Gastrocnemius medialis (tissue), 4 donors: ENCODE measurements at regions of chr7 and their contacts with region 1.

Region 1: GRCh38 chr7:131254211-131254610 is 73.5 kb upstream of the MKLN1 start:
- DNase-seq: no peak
- ATAC-seq: no peak
- H3K4me3 ChIP-seq: no peak overlapping the region
- H3K27ac ChIP-seq: peak overlapping the region in 1 of 4 donors; percentile 89
- H3K4me1 ChIP-seq: peaks cover 11 to 30% of the 10 kb centered on the region in 2 donors
- H3K27me3 ChIP-seq: no peaks in the 10 kb centered on the region
- CTCF ChIP-seq: no peak
- POLR2A ChIP-seq: no peak

Region 2: GRCh38 chr7:131139462-131139861 is 114.7 kb before region 1 on chr7:
- in situ Hi-C with region 1: no loop called
- intact Hi-C with region 1: no loop called
- DNase-seq: no peak
- ATAC-seq: no peak
- H3K4me3 ChIP-seq: no peak overlapping the region
- H3K27ac ChIP-seq: no peak overlapping the region
- H3K4me1 ChIP-seq: no peaks in the 10 kb centered on the region
- H3K27me3 ChIP-seq: no peaks in the 10 kb centered on the region
- CTCF ChIP-seq: no peak
- POLR2A ChIP-seq: no peak

Region 3: DNA sequence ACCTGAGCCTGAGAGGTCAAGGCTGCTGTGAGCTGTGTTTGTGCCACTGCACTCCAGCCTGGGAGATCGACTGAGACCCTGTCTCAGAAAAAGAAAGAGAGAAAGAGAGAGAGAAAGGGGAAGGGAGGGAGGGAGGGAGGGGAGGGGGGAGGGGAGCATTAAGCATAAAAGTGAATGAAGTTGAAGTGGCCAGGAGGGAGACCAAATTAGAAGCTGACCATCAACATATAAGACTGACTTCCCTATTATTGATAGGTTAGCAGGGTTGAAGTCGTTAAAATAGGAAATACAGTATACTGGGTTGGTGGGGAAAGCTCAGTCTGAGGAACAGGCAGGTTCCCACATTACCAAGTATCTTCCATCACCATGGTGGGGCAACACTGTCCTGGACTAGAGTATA is 43.6 kb before region 1 on chr7:
- in situ Hi-C with region 1: no loop called
- intact Hi-C with region 1: loop called (anchors 1 kb)
- DNase-seq: no peak
- ATAC-seq: no peak
- H3K4me3 ChIP-seq: no peak overlapping the region
- H3K27ac ChIP-seq: peak overlapping the region in 2 of 4 donors; percentile 45 to 65
- H3K4me1 ChIP-seq: peaks cover 0 to 16% of the 10 kb centered on the region in 2 donors
- H3K27me3 ChIP-seq: no peaks in the 10 kb centered on the region
- CTCF ChIP-seq: no peak
- POLR2A ChIP-seq: no peak

Region 4: GRCh38 chr7:131391145-131391544 is 136.9 kb after region 1 on chr7:
- in situ Hi-C with region 1: no loop called
- intact Hi-C with region 1: no loop called
- DNase-seq: no peak
- ATAC-seq: no peak
- H3K4me3 ChIP-seq: no peak overlapping the region
- H3K27ac ChIP-seq: no peak overlapping the region
- H3K4me1 ChIP-seq: peaks cover 7 to 8% of the 10 kb centered on the region in 2 donors
- H3K27me3 ChIP-seq: no peaks in the 10 kb centered on the region
- CTCF ChIP-seq: no peak
- POLR2A ChIP-seq: no peak